Sigmoid colon (tissue), 7 donors: ENCODE measurements at regions of chr3 and their contacts with region 1.

Region 1: DNA sequence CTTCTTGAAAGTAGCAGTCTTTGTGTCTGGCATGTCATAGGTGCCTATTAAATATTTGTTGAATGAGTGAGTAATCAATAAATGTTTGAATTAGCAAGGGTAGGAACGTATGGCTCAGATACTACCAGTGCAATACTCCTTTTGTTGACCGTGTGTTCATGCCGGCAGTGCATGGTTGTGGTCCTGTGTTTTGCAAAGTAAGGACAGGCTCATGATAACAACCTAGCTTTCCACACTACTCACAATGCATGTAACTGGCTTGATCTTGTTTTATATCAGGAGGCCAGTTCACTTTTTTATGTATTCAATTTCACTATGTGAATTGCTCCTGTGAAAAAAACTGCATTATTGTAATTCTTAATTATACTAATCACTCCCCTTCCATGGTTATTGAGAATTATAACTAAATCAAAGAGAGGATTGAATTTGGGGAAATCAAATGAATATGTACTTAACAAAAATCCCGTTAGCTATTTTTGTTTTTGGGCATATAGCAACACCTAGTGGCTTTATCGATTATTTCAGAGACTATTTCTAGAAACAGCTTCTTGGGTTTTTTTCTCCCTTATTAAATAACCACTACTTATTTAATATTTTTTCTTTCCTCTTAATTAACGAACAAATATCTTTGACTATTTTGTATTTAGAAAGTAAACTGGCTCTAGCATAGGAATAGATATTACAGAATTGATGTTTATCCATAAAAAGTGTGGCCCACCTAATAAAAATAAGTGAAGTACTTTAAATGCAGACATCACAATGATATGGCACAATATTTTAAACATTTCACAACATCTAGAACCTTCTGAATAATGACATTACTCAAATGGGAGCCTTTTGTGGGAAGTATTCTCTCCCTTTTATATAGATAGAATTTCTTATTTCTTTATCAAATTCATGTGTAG is 218.5 kb downstream of the BBX start:
- DNase-seq: no peak
- H3K4me3 ChIP-seq: no peak overlapping the region
- H3K27ac ChIP-seq: no peak overlapping the region
- H3K4me1 ChIP-seq: no peaks in the 10 kb centered on the region
- H3K27me3 ChIP-seq: no peaks in the 10 kb centered on the region
- CTCF ChIP-seq: peak in 3 of 4 experiments; percentile 32 to 47 (median 34)
- EP300 ChIP-seq: no peak
- POLR2A ChIP-seq: no peak

Region 2: GRCh38 chr3:107271787-107272387 is 469.4 kb before region 1 on chr3:
- intact Hi-C with region 1: loop called (anchors 5 kb)
- DNase-seq: no peak
- H3K4me3 ChIP-seq: no peak overlapping the region
- H3K27ac ChIP-seq: no peak overlapping the region
- H3K4me1 ChIP-seq: no peaks in the 10 kb centered on the region
- H3K27me3 ChIP-seq: no peaks in the 10 kb centered on the region
- CTCF ChIP-seq: peak; percentile 35 to 67 (median 57)
- EP300 ChIP-seq: no peak
- POLR2A ChIP-seq: no peak

Region 3: DNA sequence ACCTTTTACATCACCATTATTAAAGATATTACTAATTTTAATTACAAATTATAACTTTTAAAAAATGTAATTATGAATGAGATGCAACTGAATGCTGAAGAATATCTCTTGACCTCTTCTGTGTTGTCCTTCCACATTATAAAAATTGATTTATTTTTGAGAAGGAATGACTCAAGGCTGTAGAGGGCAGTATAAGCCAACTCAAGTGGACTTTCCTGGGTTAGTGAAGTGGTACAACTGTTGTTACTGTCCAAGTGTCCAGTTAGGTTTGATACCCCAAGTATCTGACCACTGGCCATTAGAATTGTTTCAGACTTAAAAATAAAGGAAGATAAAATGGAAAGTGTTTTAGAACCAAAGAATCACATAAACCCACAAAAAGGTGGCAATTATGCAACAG is 166.6 kb before region 1 on chr3:
- intact Hi-C with region 1: loop called (anchors 5 kb)
- DNase-seq: no peak
- H3K4me3 ChIP-seq: no peak overlapping the region
- H3K27ac ChIP-seq: no peak overlapping the region
- H3K4me1 ChIP-seq: no peaks in the 10 kb centered on the region
- H3K27me3 ChIP-seq: no peaks in the 10 kb centered on the region
- CTCF ChIP-seq: peak in 2 of 4 experiments; percentile 22 to 42
- EP300 ChIP-seq: no peak
- POLR2A ChIP-seq: no peak

Region 4: DNA sequence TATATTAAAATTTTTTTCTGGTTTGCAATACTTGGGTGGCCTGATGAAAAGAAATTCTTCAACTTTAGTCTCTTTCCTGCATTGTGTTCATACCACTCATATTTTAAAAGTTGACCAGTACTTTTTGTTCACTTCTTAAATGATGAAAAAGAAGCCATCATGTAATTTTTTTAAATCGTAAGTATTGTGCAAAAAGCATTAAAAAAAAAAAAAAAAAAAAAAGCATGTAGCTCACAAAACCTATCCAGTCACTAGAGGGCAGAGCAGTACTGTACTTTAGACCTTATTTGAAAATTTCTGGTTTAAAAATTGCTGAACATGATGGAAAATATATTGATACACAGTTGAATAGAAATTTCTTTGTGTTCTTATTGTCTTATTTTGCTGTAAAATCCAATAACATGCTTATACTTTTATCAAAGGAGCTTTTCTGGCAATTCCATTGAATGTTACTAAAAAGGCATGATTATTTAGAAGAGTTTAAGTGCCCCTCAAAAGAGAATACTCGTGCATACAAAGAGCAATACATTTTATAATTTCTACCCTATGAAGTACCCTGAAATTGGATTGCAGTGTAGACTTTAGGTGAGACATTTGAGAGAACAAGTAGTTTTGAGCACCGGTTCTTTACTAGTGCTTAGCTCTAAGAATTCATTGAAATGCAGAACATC is 80.8 kb before region 1 on chr3:
- intact Hi-C with region 1: loop called (anchors 5 kb)
- DNase-seq: no peak
- H3K4me3 ChIP-seq: no peak overlapping the region
- H3K27ac ChIP-seq: no peak overlapping the region
- H3K4me1 ChIP-seq: peaks cover 0 to 42% (median 18%) of the 10 kb centered on the region in 4 donors
- H3K27me3 ChIP-seq: no peaks in the 10 kb centered on the region
- CTCF ChIP-seq: peak; percentile 25 to 50 (median 38)
- EP300 ChIP-seq: no peak
- POLR2A ChIP-seq: no peak

Region 5: GRCh38 chr3:107676469-107677309 is 64.6 kb before region 1 on chr3:
- intact Hi-C with region 1: loop called (anchors 5 kb)
- DNase-seq: no peak
- H3K4me3 ChIP-seq: no peak overlapping the region
- H3K27ac ChIP-seq: no peak overlapping the region
- H3K4me1 ChIP-seq: peaks cover 0 to 56% (median 36%) of the 10 kb centered on the region in 4 donors
- H3K27me3 ChIP-seq: no peaks in the 10 kb centered on the region
- CTCF ChIP-seq: peak in 3 of 4 experiments; percentile 28 to 54 (median 47)
- EP300 ChIP-seq: no peak
- POLR2A ChIP-seq: no peak